ENCODE measurements at regions of chr19 and their contacts with region 1.

Region 1: DNA sequence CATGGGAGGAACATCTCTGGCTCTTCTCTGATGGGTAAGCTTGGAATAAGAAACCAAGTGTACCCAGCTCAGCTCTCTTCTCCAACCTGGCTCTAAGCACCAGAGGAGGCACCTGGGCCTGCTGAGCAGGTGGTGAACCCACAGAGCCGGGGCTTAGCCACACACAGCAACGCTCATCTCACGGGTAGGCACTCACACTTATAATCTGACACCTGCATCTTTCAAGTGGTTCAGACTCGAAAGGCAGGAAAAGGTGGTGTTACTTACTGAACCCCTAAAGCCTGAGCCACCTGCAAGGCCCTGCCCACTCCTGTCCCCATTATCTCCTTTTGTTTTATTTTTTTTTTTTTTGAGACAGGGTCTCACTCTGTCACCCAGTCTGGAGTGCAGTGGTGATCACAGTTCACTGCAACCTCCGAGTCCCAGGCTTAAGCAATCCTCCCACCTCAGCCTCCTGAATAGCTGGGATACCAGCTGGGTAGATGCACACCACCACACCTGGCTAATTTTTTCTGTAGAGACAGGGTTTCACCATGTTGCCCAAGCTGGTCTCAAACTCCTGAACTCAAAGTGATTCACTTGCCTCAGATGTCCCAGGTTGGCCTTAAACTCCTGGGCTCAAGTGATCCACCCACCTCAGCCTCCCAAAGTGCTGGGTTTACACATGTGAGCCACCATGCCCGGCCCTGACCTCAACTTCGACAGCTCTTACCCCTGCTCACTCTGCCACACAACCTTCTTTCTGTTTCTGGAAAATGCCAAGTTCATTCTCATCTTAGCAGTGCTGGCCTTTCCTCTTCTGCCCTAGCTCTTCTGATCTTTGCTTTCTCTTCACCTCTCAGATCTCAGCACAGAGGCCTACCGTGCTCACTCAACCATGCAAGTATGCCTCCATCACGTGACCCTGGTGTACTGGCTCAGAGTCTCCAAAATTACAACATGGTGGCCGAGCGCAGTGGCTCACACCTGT is 9.7 kb downstream of the FBXL12 start:
- DNase-seq: no peak
- H3K4me3 ChIP-seq: no peak overlapping the region
- H3K27ac ChIP-seq: no peak overlapping the region
- H3K4me1 ChIP-seq: no peaks in the 10 kb centered on the region
- H3K27me3 ChIP-seq: no peaks in the 10 kb centered on the region
- CTCF ChIP-seq: no peak
- POLR2A ChIP-seq: no peak

Region 2: DNA sequence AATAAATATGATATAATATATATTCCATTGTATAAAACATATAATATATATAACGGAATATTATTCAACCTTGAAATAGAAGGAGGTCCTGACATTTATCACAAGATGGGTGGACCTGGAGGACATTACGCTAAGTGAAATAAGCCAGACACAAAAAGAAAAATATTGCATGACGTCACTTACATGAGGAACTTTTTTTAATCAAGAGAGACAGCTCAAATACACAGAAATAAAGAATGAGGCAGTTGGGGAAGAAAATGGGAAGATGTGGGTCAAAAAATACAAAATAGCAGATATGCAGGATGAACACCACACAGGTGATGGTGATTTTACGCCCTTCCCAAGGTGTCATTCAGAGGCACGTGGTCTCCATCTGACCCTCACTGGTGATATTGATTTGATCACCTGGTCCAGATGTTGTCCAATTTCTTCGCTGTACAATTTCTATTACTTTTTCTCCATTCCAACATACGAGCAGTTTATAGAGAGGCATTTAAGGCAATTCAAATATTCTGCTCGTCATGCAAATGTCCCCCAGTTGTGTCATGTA is 669.5 kb before region 1 on chr19:
- intact Hi-C with region 1: loop called (anchors 10 kb)
- DNase-seq: no peak
- H3K4me3 ChIP-seq: peak overlapping the region; percentile 66 to 94 (median 88)
- H3K27ac ChIP-seq: peak overlapping the region in 2 of 3 donors; percentile 71 to 85
- H3K4me1 ChIP-seq: peaks cover 6 to 10% of the 10 kb centered on the region in 2 donors
- H3K27me3 ChIP-seq: no peaks in the 10 kb centered on the region
- CTCF ChIP-seq: no peak
- POLR2A ChIP-seq: no peak

Region 3: GRCh38 chr19:10061717-10062310 is 252.7 kb after region 1 on chr19:
- intact Hi-C with region 1: no loop called
- DNase-seq: no peak
- H3K4me3 ChIP-seq: no peak overlapping the region
- H3K27ac ChIP-seq: no peak overlapping the region
- H3K4me1 ChIP-seq: no peaks in the 10 kb centered on the region
- H3K27me3 ChIP-seq: no peaks in the 10 kb centered on the region
- CTCF ChIP-seq: no peak
- POLR2A ChIP-seq: no peak